ENCODE measurements at regions of chr17 and their contacts with region 1.

Region 1: DNA sequence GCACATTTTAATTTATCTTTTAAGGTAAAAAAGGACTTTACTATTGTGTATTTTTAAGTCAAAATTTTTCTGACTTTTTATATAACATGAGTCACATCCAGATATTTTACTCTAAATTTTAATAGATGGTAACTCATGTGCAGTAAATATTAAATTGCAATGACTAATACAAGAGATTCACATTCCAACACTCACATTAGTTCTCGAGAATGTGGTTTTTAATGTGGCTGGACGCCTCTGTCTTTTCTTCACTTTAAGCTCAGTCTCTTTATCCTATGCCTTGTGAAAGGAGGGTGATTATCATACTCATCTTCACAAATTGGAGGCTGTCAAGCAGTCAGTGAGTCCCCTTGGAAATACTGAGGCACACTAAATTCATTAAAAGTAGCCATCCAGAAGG is 315.6 kb downstream of the HS3ST3B1 start:
- DNase-seq: no peak
- H3K4me3 ChIP-seq: no peak overlapping the region
- H3K27ac ChIP-seq: no peak overlapping the region
- H3K4me1 ChIP-seq: no peaks in the 10 kb centered on the region
- H3K27me3 ChIP-seq: no peaks in the 10 kb centered on the region
- CTCF ChIP-seq: no peak
- EP300 ChIP-seq: no peak
- POLR2A ChIP-seq: no peak

Region 2: GRCh38 chr17:14014657-14015056 is 601.9 kb before region 1 on chr17:
- in situ Hi-C with region 1: no loop called
- intact Hi-C with region 1: loop called (anchors 5 kb)
- DNase-seq: no peak
- H3K4me3 ChIP-seq: no peak overlapping the region
- H3K27ac ChIP-seq: no peak overlapping the region
- H3K4me1 ChIP-seq: no peaks in the 10 kb centered on the region
- H3K27me3 ChIP-seq: peaks cover 3% of the 10 kb centered on the region
- CTCF ChIP-seq: no peak
- EP300 ChIP-seq: no peak
- POLR2A ChIP-seq: no peak

Region 3: DNA sequence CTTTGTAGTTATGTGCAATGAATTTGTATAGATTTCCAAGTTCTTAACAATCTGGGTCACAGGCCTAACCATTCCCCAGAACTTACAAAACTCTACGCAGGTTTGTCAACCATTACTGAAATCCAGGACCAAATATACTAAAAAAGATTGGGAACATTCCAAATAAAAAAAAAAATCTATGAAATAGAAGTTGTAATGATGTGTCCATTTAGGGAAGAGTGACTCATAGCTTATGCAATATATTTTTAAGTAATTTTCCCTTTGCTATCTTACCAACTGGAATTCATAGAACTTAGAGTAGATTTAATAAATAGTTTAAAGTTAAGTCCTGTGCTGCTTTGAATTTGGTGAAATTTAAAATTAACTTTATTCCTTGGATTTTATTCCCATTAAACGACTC is 255.4 kb after region 1 on chr17:
- in situ Hi-C with region 1: no loop called
- intact Hi-C with region 1: no loop called
- DNase-seq: no peak
- H3K4me3 ChIP-seq: no peak overlapping the region
- H3K27ac ChIP-seq: no peak overlapping the region
- H3K4me1 ChIP-seq: no peaks in the 10 kb centered on the region
- H3K27me3 ChIP-seq: no peaks in the 10 kb centered on the region
- CTCF ChIP-seq: no peak
- EP300 ChIP-seq: no peak
- POLR2A ChIP-seq: no peak

Measured in transverse colon (tissue), 4 donors.